ENCODE measurements at regions of chr2 and their contacts with region 1.

Region 1: GRCh38 chr2:127884436-127885345 is 1.1 kb downstream of the AMMECR1L start:
- DNase-seq: no peak
- ATAC-seq: no peak
- H3K4me3 ChIP-seq: peak overlapping the region; percentile 29 to 87 (median 74)
- H3K27ac ChIP-seq: peak overlapping the region; percentile 43 to 94 (median 92)
- H3K4me1 ChIP-seq: peaks cover 5 to 63% (median 47%) of the 10 kb centered on the region in 9 donors
- H3K27me3 ChIP-seq: no peaks in the 10 kb centered on the region
- CTCF ChIP-seq: no peak

Region 2: GRCh38 chr2:127753374-127753773 is 131.3 kb before region 1 on chr2:
- intact Hi-C with region 1: no loop called
- DNase-seq: no peak
- ATAC-seq: no peak
- H3K4me3 ChIP-seq: no peak overlapping the region
- H3K27ac ChIP-seq: no peak overlapping the region
- H3K4me1 ChIP-seq: peaks cover 0 to 7% (median 0%) of the 10 kb centered on the region in 9 donors
- H3K27me3 ChIP-seq: no peaks in the 10 kb centered on the region
- CTCF ChIP-seq: no peak

Region 3: GRCh38 chr2:127763776-127764175 is 120.9 kb before region 1 on chr2:
- intact Hi-C with region 1: no loop called
- DNase-seq: no peak
- ATAC-seq: no peak
- H3K4me3 ChIP-seq: no peak overlapping the region
- H3K27ac ChIP-seq: no peak overlapping the region
- H3K4me1 ChIP-seq: peaks cover 0 to 12% (median 0%) of the 10 kb centered on the region in 9 donors
- H3K27me3 ChIP-seq: no peaks in the 10 kb centered on the region
- CTCF ChIP-seq: no peak

Region 4: GRCh38 chr2:127913808-127914457 is 29.2 kb after region 1 on chr2:
- intact Hi-C with region 1: no loop called
- DNase-seq: no peak
- ATAC-seq: no peak
- H3K4me3 ChIP-seq: no peak overlapping the region
- H3K27ac ChIP-seq: no peak overlapping the region
- H3K4me1 ChIP-seq: no peaks in the 10 kb centered on the region
- H3K27me3 ChIP-seq: peaks cover 0 to 6% (median 0%) of the 10 kb centered on the region in 7 donors
- CTCF ChIP-seq: no peak

Region 5: GRCh38 chr2:128027801-128028667 is 143.3 kb after region 1 on chr2 and contains the start of gene SAP130:
- intact Hi-C with region 1: loop called in 4 of 10 experiments (anchors 10 kb)
- DNase-seq: peak; percentile 98 to 99
- ATAC-seq: peak; percentile 91 to 96 (median 92)
- H3K4me3 ChIP-seq: peak within 1 kb of the TSS; percentile 82 to 99 (median 97)
- H3K27ac ChIP-seq: peak within 1 kb of the TSS; percentile 92 to 99 (median 96)
- H3K4me1 ChIP-seq: peaks cover 8 to 20% (median 16%) of the 10 kb centered on the region in 9 donors
- H3K27me3 ChIP-seq: no peaks in the 10 kb centered on the region
- CTCF ChIP-seq: peak in 2 of 9 donors; percentile 7 to 19
- total RNA-seq, gene SAP130: 12.4 to 20.4 (median 17.3) TPM

Region 6: GRCh38 chr2:128090945-128091725 is 206.4 kb after region 1 on chr2 and contains the start of gene UGGT1:
- intact Hi-C with region 1: loop called in 4 of 10 experiments (anchors 5 to 10 kb)
- DNase-seq: peak; percentile 92 to 95
- ATAC-seq: peak; percentile 99 to 100 (median 100)
- H3K4me3 ChIP-seq: peak within 1 kb of the TSS; percentile 68 to 99 (median 82)
- H3K27ac ChIP-seq: peak within 1 kb of the TSS; percentile 67 to 92 (median 88)
- H3K4me1 ChIP-seq: peaks cover 0 to 39% (median 25%) of the 10 kb centered on the region in 9 donors
- H3K27me3 ChIP-seq: no peaks in the 10 kb centered on the region
- CTCF ChIP-seq: no peak
- total RNA-seq, gene UGGT1: 22.3 to 44.0 (median 28.8) TPM

Region 7: GRCh38 chr2:128145651-128146050 is 261.0 kb after region 1 on chr2:
- intact Hi-C with region 1: loop called in 1 of 10 experiments (anchors 10 kb)
- DNase-seq: no peak
- ATAC-seq: no peak
- H3K4me3 ChIP-seq: no peak overlapping the region
- H3K27ac ChIP-seq: no peak overlapping the region
- H3K4me1 ChIP-seq: peaks cover 0 to 5% (median 0%) of the 10 kb centered on the region in 9 donors
- H3K27me3 ChIP-seq: no peaks in the 10 kb centered on the region
- CTCF ChIP-seq: no peak

Measured in heart right ventricle (tissue), 16 donors.